Left colon (tissue), 2 donors: ENCODE measurements at regions of chr5 and their contacts with region 1.

Region 1: DNA sequence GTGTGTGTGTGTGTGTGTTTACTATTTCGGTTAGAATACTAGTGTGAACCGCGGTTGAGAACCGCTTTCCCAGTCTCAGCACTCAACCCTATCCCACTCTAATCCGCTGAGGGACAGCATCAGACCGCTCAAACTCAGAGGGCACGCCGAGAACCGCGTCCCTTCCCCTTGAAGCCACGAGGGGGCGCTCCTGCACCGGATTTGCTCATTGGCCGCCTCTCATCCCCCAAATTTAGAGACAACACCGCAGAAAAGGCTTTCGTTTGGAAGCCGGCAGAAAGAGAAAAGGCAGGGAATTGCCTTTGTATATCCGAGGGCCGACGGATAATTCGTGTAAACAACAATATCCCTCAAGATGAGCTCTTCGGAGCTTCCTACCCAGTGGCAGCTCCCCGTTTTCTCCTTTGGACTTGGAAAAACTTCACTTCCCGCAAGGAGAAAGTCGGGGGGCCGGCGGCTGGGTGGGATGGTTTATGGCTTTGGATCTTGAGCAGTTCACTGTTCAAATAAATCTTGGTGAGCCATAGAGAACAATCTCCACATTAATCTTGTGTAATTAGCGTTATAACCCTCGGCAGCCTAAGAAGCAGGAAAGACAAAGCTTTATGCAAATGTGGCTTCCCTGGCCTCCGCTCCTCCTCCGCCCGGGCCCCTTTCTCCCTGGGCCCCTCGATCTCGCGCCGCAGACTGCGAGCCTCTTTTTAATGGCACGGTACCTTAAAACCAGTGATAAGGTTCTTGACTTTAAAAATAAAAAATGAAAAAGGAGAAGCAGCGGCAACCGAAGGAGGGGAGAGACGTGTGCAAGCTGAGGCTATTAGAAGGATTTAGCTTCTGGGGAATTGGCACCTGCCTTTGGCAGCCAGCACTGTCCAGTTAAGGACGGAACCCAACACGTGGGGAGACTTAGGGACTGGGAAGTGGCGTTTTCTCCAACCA is 296.8 kb downstream of the PARP8 start:
- DNase-seq: peak; percentile 31 to 68
- ATAC-seq: peak; percentile 86

Region 2: GRCh38 chr5:51001227-51001923 is 38.2 kb after region 1 on chr5:
- intact Hi-C with region 1: no loop called
- DNase-seq: no peak
- ATAC-seq: no peak

Region 3: DNA sequence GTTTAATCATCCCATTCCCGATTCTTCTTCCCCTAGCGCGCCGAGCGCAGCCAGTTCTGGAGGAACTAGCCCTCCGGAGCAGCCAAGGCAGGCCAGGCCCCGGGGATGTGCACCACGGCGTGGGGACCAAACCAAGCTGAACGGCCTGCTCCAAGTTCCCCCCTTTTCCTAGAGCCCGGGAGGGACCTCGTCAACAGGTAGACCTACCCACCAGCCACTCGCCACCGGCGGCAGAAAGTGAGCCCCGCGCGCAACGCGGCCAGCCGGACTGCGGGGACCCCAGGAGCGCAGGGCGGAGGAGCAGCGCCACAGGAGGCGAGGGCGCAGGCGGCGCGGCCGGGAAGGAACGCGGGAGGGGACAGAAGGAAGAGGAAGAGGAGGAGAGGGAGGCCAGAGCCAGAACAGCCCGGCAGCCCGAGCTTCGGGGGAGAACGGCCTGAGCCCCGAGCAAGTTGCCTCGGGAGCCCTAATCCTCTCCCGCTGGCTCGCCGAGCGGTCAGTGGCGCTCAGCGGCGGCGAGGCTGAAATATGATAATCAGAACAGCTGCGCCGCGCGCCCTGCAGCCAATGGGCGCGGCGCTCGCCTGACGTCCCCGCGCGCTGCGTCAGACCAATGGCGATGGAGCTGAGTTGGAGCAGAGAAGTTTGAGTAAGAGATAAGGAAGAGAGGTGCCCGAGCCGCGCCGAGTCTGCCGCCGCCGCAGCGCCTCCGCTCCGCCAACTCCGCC is 419.7 kb after region 1 on chr5 and contains the start of gene ISL1:
- intact Hi-C with region 1: loop called in 1 of 2 experiments (anchors 10 kb)
- DNase-seq: peak; percentile 69 to 75
- ATAC-seq: peak; percentile 98
- total RNA-seq, gene ISL1: 0.52 to 1.9 TPM

Region 4: DNA sequence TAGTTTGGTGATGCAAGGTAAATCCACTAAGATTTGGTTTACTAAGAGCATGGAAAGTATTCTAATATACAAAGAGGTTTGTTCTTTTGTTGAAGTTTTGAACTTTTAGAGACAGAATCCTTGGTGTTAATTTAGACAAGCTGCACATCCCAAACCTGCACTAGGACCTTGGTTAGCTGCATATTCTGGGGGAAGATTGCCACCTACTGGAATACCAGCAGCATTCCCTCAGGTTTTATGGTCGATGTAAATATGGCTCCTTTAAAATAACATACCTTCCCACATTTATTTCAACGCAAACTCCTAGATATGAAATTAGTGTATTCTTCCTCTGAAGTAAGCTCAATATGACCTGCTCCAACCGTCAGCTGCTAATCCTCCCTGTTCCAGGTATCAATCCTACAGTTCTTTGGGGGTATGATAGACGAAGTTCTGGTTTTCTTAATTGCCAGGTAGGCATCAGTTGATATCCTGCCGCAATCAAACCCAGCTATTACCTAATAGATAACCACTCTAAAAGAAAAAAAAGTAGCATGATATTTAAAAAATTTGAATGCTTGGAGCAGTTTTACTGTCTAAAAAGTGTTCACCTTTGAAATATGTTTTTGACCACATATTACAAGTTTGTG is 1044.1 kb after region 1 on chr5:
- intact Hi-C with region 1: loop called in 1 of 2 experiments (anchors 5 kb)
- DNase-seq: no peak
- ATAC-seq: peak; percentile 63